ENCODE measurements at regions of chr6 and their contacts with region 1.

Region 1: GRCh38 chr6:138477913-138478539 is 21.3 kb downstream of the NHSL1 start:
- DNase-seq: no peak
- ATAC-seq: no peak
- H3K4me3 ChIP-seq: no peak overlapping the region
- H3K27ac ChIP-seq: no peak overlapping the region
- H3K4me1 ChIP-seq: peaks cover 0 to 20% (median 5%) of the 10 kb centered on the region in 9 donors
- H3K27me3 ChIP-seq: no peaks in the 10 kb centered on the region
- CTCF ChIP-seq: no peak

Region 2: GRCh38 chr6:138440758-138441357 is 37.2 kb before region 1 on chr6:
- intact Hi-C with region 1: loop called in 1 of 10 experiments (anchors 5 kb)
- DNase-seq: no peak
- ATAC-seq: peak in 2 of 8 donors; percentile 19 to 44
- H3K4me3 ChIP-seq: no peak overlapping the region
- H3K27ac ChIP-seq: peak overlapping the region in 5 of 10 donors; percentile 4 to 61 (median 11)
- H3K4me1 ChIP-seq: peaks cover 0 to 42% (median 4%) of the 10 kb centered on the region in 9 donors
- H3K27me3 ChIP-seq: no peaks in the 10 kb centered on the region
- CTCF ChIP-seq: no peak

Measured in heart right ventricle (tissue), 16 donors.